Sciatic nerve (tissue), 2 donors: ENCODE measurements at regions of chr5 and their contacts with region 1.

Region 1: GRCh38 chr5:33299621-33300208 is 141.1 kb upstream of the TARS1 start:
- DNase-seq: no peak
- ATAC-seq: peak; percentile 78

Region 2: GRCh38 chr5:33080287-33080686 is 219.4 kb before region 1 on chr5:
- intact Hi-C with region 1: loop called (anchors 5 kb)
- DNase-seq: no peak
- ATAC-seq: no peak